ENCODE measurements at regions of chr18 and their contacts with region 1.

Region 1: GRCh38 chr18:46281185-46282176 is 177.3 kb downstream of the HAUS1 start:
- DNase-seq: peak in 2 of 3 donors; percentile 77 to 80
- ATAC-seq: peak; percentile 86
- H3K4me3 ChIP-seq: no peak overlapping the region
- H3K4me1 ChIP-seq: no peaks in the 10 kb centered on the region
- CTCF ChIP-seq: peak; percentile 75

Region 2: DNA sequence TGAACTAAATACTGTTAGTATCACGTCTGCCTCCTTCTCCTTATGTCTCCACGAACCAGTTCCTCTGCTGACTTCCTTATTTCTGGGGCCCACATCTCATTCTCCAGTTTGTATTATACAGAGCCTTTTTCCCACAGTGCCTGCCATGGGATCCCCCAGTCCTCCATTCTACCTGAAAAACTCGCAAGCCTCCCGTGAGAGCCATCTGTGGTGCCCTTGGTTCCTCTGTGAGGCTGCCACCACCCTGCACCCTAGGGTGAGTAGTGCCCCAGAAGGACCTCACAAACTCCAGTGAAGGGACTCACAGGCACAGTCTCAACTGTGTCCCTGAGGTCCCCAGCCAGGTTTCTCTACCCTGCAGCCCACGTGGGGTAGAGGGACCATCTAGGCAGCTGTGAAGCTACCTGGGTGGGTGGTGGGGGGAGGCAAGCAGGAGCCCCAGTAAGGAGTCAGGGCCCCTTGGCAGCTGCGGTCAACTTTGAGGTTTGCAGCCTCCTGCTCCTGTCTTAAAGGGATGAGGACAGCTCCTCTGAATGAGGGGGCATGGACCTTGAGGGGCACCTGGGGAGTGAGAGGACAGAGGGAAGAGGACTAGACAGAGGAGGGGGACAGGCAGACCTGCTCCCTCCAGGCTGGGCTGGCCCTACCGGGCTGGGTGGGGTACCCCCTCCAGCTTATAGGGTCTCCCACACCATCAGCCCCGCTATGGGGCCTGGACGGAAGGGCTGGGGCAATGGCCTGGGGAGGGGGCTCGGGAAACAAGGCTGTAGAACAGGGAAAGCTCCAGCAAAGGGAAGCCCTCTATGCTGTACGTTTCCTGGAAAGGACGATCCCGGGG is 210.4 kb before region 1 on chr18:
- intact Hi-C with region 1: no loop called
- DNase-seq: no peak
- ATAC-seq: peak; percentile 22
- H3K4me3 ChIP-seq: peak overlapping the region; percentile 40
- H3K4me1 ChIP-seq: peaks cover 7% of the 10 kb centered on the region
- CTCF ChIP-seq: no peak

Region 3: GRCh38 chr18:46481048-46481846 is 199.8 kb after region 1 on chr18:
- intact Hi-C with region 1: loop called in 1 of 2 experiments (anchors 10 kb)
- DNase-seq: peak in 1 of 3 donors; percentile 81
- ATAC-seq: peak; percentile 56
- H3K4me3 ChIP-seq: no peak overlapping the region
- H3K4me1 ChIP-seq: no peaks in the 10 kb centered on the region
- CTCF ChIP-seq: peak; percentile 44